PC-9 (cell line): ENCODE measurements at regions of chr16 and their contacts with region 1.

Region 1: DNA sequence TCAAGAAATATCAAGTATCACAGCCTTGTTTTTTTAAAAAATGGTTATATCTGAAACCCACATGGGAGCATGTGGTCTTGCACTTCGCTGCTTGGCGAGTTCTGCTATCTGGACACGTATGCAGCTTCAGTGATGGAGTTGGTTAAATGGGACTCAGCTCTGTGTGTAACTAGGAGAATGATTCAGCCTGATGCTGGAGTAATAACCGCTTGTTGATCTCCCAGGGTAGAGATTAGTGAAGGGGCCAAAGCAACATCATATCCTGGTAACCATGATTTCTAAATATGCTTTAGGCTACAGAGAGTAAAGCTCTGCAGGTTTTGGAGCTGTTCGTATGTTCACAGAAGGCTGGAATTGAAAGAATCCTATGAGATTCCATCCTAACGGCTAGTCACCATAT is 63.2 kb downstream of the IQCK start:
- DNase-seq: no peak
- H3K4me3 ChIP-seq: no peak overlapping the region
- H3K27ac ChIP-seq: no peak overlapping the region
- H3K4me1 ChIP-seq: no peaks in the 10 kb centered on the region
- H3K27me3 ChIP-seq: no peaks in the 10 kb centered on the region
- CTCF ChIP-seq: no peak

Region 2: DNA sequence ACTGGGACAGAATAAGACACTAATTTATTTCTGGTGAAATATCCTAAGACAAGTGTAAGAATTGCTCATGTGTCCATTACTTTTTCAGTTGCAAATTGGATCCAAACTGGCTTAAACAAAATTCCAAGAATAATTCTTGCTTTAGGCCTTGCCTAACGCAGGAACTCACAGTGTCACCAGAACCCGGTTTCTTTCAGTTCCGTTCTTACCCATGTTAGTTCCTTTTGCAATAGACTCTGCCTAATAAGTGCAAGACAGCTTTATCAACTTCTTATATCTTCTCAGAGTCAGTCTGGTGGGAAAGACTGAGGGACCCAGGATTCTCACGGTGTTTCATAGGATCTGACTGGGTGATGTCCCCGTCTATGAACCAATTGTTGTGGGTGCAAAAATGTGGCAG is 284.1 kb before region 1 on chr16:
- CTCF ChIA-PET with region 1: no interaction called
- POLR2A ChIA-PET with region 1: no interaction called
- intact Hi-C with region 1: no loop called
- DNase-seq: no peak
- H3K4me3 ChIP-seq: no peak overlapping the region
- H3K27ac ChIP-seq: no peak overlapping the region
- H3K4me1 ChIP-seq: no peaks in the 10 kb centered on the region
- H3K27me3 ChIP-seq: no peaks in the 10 kb centered on the region
- CTCF ChIP-seq: no peak

Region 3: GRCh38 chr16:19837984-19838707 is 56.9 kb after region 1 on chr16:
- CTCF ChIA-PET with region 1: interaction called, 11 read pairs
- POLR2A ChIA-PET with region 1: no interaction called
- intact Hi-C with region 1: no loop called
- DNase-seq: no peak
- H3K4me3 ChIP-seq: no peak overlapping the region
- H3K27ac ChIP-seq: no peak overlapping the region
- H3K4me1 ChIP-seq: no peaks in the 10 kb centered on the region
- H3K27me3 ChIP-seq: no peaks in the 10 kb centered on the region
- CTCF ChIP-seq: no peak

Region 4: GRCh38 chr16:20203272-20203671 is 422.0 kb after region 1 on chr16:
- CTCF ChIA-PET with region 1: no interaction called
- POLR2A ChIA-PET with region 1: no interaction called
- intact Hi-C with region 1: no loop called
- DNase-seq: no peak
- H3K4me3 ChIP-seq: no peak overlapping the region
- H3K27ac ChIP-seq: no peak overlapping the region
- H3K4me1 ChIP-seq: no peaks in the 10 kb centered on the region
- H3K27me3 ChIP-seq: peaks cover 5% of the 10 kb centered on the region; the same call in 1 of the 2 replicates
- CTCF ChIP-seq: no peak